Activated naive CD4-positive, alpha-beta T cell treated with anti-CD3 and anti-CD28 coated beads for 36 hours (primary cell): ENCODE measurements at regions of chr18 and their contacts with region 1.

Region 1: GRCh38 chr18:36129300-36130038 is at the starts of genes ELP2 and SLC39A6:
- DNase-seq: peak; percentile 94
- H3K4me3 Mint-ChIP-seq: peak within 1 kb of the TSS; percentile 91
- H3K27ac Mint-ChIP-seq: peak within 1 kb of the TSS; percentile 92
- H3K4me1 Mint-ChIP-seq: peaks cover 61% of the 10 kb centered on the region
- H3K27me3 Mint-ChIP-seq: no peaks in the 10 kb centered on the region
- total RNA-seq, gene ELP2: 90.1 to 92.0 TPM
- total RNA-seq, gene SLC39A6: 15.4 to 15.7 TPM

Region 2: DNA sequence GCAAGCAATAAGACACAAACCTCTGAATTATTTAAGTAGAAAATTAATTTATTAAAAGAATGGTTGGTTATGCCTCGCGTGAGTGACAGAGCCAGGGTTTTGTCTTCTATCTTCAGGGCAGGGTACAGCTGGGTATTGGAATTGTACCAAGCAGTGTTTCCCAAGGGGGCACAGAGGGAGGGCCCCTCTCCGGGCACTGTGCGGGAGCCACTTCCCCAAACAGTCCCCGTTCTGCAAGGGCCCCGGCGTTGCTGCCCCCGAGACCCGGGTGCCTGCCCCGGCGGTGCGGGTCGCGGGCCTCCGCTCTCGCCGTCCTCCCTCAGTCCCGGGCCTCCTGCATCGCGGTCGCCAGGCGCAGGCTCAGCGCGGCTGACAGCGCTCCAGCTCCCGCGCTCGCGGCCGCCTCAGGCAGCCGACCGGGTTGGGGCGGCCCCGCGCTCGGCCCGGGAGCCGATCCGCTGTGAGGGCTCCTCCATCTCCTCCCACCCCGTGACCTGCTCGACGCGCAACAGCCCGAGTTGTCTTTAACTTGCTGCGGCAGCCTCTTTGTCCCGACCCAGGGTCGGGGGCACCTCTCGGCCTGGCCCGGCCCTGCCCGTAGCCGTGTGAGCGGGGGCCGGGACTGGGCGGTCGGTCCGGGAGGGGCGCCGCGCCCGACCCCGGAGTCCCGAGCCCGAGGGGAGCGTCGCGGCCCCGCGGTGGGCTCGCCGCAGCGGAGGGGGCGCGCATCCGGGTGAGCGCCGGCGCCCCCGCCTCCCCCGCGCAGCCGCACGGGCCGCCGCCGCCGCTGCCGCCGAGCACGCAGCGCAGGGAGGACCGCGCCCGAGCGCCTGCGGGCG is 548.5 kb before region 1 on chr18:
- CTCF ChIA-PET with region 1: no interaction called
- intact Hi-C with region 1: loop called (anchors 10 kb)
- DNase-seq: peak; percentile 51
- H3K4me3 Mint-ChIP-seq: peak overlapping the region; percentile 74
- H3K27ac Mint-ChIP-seq: peak overlapping the region; percentile 71
- H3K4me1 Mint-ChIP-seq: peaks cover 45% of the 10 kb centered on the region
- H3K27me3 Mint-ChIP-seq: peaks cover 15% of the 10 kb centered on the region

Region 3: GRCh38 chr18:36015629-36016028 is 113.8 kb before region 1 on chr18:
- CTCF ChIA-PET with region 1: interaction called, 5 read pairs
- intact Hi-C with region 1: loop called (anchors 1 kb)
- DNase-seq: no peak
- H3K4me3 Mint-ChIP-seq: no peak overlapping the region
- H3K27ac Mint-ChIP-seq: no peak overlapping the region
- H3K4me1 Mint-ChIP-seq: peaks cover 2% of the 10 kb centered on the region
- H3K27me3 Mint-ChIP-seq: no peaks in the 10 kb centered on the region

Region 4: GRCh38 chr18:36142751-36143150 is 13.3 kb after region 1 on chr18:
- CTCF ChIA-PET with region 1: interaction called, 4 read pairs
- intact Hi-C with region 1: loop called (anchors 1 kb)
- DNase-seq: no peak
- H3K4me3 Mint-ChIP-seq: no peak overlapping the region
- H3K27ac Mint-ChIP-seq: no peak overlapping the region
- H3K4me1 Mint-ChIP-seq: peaks cover 7% of the 10 kb centered on the region
- H3K27me3 Mint-ChIP-seq: no peaks in the 10 kb centered on the region

Region 5: GRCh38 chr18:36153203-36153602 is 23.7 kb after region 1 on chr18:
- CTCF ChIA-PET with region 1: no interaction called
- intact Hi-C with region 1: no loop called
- DNase-seq: no peak
- H3K4me3 Mint-ChIP-seq: no peak overlapping the region
- H3K27ac Mint-ChIP-seq: no peak overlapping the region
- H3K4me1 Mint-ChIP-seq: peaks cover 8% of the 10 kb centered on the region
- H3K27me3 Mint-ChIP-seq: no peaks in the 10 kb centered on the region

Region 6: GRCh38 chr18:36186911-36187834 is 57.7 kb after region 1 on chr18 and contains the start of gene MOCOS:
- CTCF ChIA-PET with region 1: no interaction called
- intact Hi-C with region 1: loop called (anchors 1 kb)
- DNase-seq: peak; percentile 36
- H3K4me3 Mint-ChIP-seq: peak within 1 kb of the TSS; percentile 73
- H3K27ac Mint-ChIP-seq: no peak within 1 kb of the TSS
- H3K4me1 Mint-ChIP-seq: peaks cover 3% of the 10 kb centered on the region
- H3K27me3 Mint-ChIP-seq: peaks cover 20% of the 10 kb centered on the region
- total RNA-seq, gene MOCOS: not detected

Region 7: GRCh38 chr18:36828630-36829361 is 699.3 kb after region 1 on chr18 and contains the starts of genes KIAA1328 and TPGS2:
- CTCF ChIA-PET with region 1: no interaction called
- intact Hi-C with region 1: loop called (anchors 1 kb)
- DNase-seq: peak; percentile 88
- H3K4me3 Mint-ChIP-seq: peak within 1 kb of the TSS; percentile 82
- H3K27ac Mint-ChIP-seq: peak within 1 kb of the TSS; percentile 81
- H3K4me1 Mint-ChIP-seq: peaks cover 46% of the 10 kb centered on the region
- H3K27me3 Mint-ChIP-seq: no peaks in the 10 kb centered on the region
- total RNA-seq, gene KIAA1328: 7.2 to 7.8 TPM
- total RNA-seq, gene TPGS2: 71.5 to 73.4 TPM

Region 8: DNA sequence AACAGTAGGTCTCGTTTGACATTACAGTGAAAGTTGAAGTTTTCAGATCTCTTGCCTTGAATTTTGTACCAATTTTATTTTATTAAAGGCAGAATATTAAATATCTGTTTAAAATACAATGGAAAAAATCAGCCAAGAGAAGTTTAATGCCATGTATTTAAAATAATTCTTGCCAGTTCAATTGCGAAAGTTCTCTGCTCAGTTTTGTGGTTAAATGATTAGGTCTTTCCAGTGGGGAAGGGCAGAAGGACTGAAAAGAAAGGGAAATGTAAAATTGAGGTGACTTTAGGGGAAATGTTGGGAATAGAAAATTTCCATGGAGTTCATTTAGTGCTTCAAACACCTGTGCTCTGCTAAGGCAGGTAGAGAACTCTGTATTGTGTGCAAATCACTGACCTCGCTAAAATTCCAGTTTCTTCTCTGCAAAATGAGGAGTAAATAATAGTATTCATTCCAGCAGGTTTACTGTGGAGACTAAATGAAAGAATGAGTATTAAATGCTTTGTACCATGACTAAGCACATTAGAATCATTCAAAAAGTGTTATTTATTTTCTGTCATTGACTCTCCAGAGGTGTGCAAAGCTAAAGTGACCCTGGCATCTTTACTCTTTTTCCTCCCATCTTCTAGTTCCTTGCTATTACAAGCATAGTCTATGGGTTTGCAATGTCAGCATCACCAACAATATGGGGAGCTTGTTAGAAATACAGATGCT is 773.9 kb after region 1 on chr18:
- CTCF ChIA-PET with region 1: no interaction called
- intact Hi-C with region 1: no loop called
- DNase-seq: no peak
- H3K4me3 Mint-ChIP-seq: no peak overlapping the region
- H3K27ac Mint-ChIP-seq: no peak overlapping the region
- H3K4me1 Mint-ChIP-seq: peaks cover 3% of the 10 kb centered on the region
- H3K27me3 Mint-ChIP-seq: no peaks in the 10 kb centered on the region